ENCODE measurements at regions of chr15 and their contacts with region 1.

Region 1: GRCh38 chr15:65133548-65134200 is at the start of gene PDCD7:
- DNase-seq: peak; percentile 80
- H3K4me3 Mint-ChIP-seq: peak within 1 kb of the TSS; percentile 92
- H3K27ac Mint-ChIP-seq: peak within 1 kb of the TSS; percentile 93
- H3K4me1 Mint-ChIP-seq: peaks cover 31% of the 10 kb centered on the region
- H3K27me3 Mint-ChIP-seq: peaks cover 2% of the 10 kb centered on the region
- total RNA-seq, gene PDCD7: 51.2 and 54.7 TPM in 2 replicates

Region 2: GRCh38 chr15:65222891-65223290 is 89.2 kb after region 1 on chr15:
- intact Hi-C with region 1: no loop called
- DNase-seq: no peak
- H3K4me3 Mint-ChIP-seq: no peak overlapping the region
- H3K27ac Mint-ChIP-seq: no peak overlapping the region
- H3K4me1 Mint-ChIP-seq: peaks cover 10% of the 10 kb centered on the region
- H3K27me3 Mint-ChIP-seq: peaks cover 5% of the 10 kb centered on the region

Region 3: GRCh38 chr15:65264863-65265430 is 131.3 kb after region 1 on chr15:
- intact Hi-C with region 1: no loop called
- DNase-seq: no peak
- H3K4me3 Mint-ChIP-seq: no peak overlapping the region
- H3K27ac Mint-ChIP-seq: no peak overlapping the region
- H3K4me1 Mint-ChIP-seq: no peaks in the 10 kb centered on the region
- H3K27me3 Mint-ChIP-seq: no peaks in the 10 kb centered on the region

Region 4: DNA sequence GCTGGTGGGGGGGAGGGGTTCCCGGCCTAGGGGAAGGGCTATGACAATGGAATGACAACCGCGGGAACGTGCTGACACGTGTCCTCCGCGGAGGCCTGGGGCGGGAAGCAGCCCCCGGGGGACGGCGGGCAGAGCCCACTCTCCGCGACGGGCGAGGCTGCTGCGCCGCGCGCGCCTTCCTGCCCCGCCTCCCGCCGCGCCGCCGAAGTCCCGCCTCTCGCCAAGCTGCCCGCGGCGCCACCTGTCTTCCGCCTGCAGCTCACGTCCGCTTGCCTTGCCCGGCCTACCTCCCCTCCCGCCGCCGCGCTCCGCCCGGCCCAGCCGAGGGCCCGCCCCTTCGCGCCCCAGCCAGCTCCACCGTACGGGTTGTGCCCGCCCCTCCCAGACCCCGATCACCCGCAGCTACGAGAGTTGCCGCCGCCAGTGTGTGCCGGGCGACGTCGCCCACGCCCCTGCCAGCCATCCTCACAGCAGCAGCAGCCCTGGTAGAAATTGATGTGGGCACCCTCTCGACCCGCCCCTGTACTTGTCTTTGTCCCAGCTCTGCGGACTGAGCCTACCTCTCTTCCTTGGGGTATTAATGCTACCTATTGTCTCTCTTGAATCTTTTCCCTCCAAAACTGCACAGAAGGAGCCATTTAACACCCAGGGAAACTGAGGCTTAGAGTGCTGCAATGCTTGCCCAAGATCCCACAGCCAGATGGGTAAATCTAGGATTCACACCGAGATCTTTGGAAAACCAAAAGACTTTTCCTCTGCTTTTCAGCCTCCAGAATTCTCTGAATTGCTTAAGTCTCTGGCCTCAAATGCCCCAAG is 153.2 kb after region 1 on chr15 and contains the start of gene PARP16:
- intact Hi-C with region 1: loop called (anchors 1 kb)
- DNase-seq: peak; percentile 90
- H3K4me3 Mint-ChIP-seq: peak within 1 kb of the TSS; percentile 86
- H3K27ac Mint-ChIP-seq: peak within 1 kb of the TSS; percentile 76
- H3K4me1 Mint-ChIP-seq: peaks cover 27% of the 10 kb centered on the region
- H3K27me3 Mint-ChIP-seq: no peaks in the 10 kb centered on the region
- total RNA-seq, gene PARP16: 12.4 and 14.0 TPM in 2 replicates

Measured in activated T-helper 1 cell treated with anti-CD3 and anti-CD28 coated beads, Interleukin-12 subunit alpha, Interleukin-12 subunit beta, Interleukin-2, Interleukin-4 antibody, amounts not matched to agents 30 ng/mL and 10 ng/mL and 1 ng/mL, durations not matched to agents 14 hours and 24 hours and 36 hours (primary cell).